ENCODE measurements at regions of chr11 and their contacts with region 1.

Region 1: DNA sequence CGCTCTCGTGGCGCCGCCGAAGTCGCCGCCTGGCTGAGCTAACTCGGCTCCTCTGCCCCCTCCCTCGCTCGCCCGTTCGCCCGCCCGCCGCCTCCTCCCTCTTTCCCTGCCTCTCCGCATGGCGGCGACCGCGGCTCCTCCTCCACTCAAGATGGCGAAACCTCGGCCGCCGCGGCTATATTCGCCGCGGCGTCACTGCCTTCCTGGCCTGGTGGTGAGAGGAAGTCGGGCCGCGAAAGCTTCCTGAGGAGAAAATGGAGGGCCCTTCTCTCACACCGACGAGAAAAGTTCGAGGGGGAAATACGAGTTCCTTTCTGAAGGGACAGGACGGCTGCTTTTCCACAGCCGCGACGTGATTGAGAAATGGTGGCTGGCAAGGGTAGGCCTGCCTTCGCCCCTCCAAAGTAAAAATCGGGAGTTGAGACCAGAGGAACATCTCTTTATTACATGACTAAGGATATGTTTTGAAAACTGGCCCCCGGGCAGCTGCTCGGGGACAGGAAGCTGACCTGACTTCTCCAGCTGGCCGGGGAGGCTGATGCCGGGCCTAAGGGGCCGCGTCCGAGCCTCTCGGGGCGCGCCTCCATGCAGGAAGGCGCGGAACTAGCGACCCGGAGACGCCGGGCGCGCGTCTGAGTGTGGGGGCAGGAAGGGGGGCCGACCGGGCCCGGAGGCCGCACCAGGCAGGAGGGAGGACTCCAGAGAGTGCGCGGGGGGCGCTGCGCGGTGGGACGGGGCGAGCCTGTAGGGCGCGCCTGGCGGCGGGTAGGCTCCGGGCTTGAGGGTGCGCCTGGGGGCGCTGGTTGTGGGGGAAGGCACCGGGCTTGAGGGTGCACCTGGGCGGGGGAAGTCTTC is at the start of gene DDX6:
- DNase-seq: peak; percentile 85
- H3K4me3 Mint-ChIP-seq: peak within 1 kb of the TSS; percentile 98
- H3K27ac Mint-ChIP-seq: peak within 1 kb of the TSS; percentile 99
- H3K4me1 Mint-ChIP-seq: peaks cover 29% of the 10 kb centered on the region
- H3K27me3 Mint-ChIP-seq: no peaks in the 10 kb centered on the region
- total RNA-seq, gene DDX6: 110 and 112 TPM in 2 replicates

Region 2: GRCh38 chr11:118401151-118401878 is 390.0 kb before region 1 on chr11 and contains the start of gene ATP5MG:
- intact Hi-C with region 1: loop called (anchors 5 kb)
- DNase-seq: peak; percentile 87
- H3K4me3 Mint-ChIP-seq: peak within 1 kb of the TSS; percentile 93
- H3K27ac Mint-ChIP-seq: peak within 1 kb of the TSS; percentile 96
- H3K4me1 Mint-ChIP-seq: peaks cover 68% of the 10 kb centered on the region
- H3K27me3 Mint-ChIP-seq: no peaks in the 10 kb centered on the region
- total RNA-seq, gene ATP5MG: 205 and 216 TPM in 2 replicates

Region 3: DNA sequence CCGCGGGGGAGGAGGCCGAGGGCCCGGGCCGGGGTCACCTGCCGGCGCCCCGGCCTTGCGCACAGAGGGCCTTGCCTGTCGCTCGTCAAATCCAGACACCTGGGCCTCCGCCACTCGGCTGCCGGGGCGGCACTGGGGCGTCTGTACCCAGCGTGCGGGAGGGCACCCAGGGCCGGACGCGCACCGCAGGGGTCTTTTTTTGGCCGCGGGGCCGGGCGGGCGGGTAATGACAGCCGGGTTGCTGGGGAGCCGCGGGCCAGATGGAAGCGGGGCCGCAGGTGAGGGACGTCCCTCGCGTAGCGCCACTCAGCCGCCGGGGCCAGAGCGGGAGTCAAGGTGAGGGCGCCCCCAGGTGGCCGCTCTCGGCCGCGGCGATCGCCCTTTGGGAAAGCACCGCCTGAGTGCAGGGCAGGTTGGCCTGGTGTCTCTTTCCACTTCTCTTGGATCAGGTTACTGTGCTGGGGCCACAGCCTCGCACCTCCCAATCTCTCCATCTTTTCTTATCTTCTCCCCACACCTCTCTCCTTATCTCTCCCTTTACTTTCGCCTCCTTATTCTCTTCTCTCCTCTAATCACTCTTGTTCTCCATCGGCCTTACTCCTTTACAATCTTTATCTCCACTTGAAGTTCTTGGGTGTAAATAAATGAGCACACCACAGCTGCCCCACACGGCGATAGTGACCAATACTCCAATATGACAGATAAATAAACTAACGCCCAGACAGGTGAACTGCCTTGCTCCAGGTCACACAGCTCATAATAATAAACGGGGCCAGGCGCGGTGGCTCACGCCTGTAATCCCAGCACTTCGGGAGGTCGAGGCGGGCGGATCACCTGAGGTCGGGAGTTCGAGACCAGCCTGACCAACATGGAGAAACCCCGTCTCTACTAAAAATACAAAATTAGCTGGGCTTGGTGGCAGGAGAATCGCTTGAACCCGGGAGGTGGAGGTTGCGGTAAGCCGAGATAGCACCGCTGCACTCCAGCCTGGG is 180.2 kb before region 1 on chr11:
- intact Hi-C with region 1: loop called (anchors 1 kb)
- DNase-seq: peak; percentile 73
- H3K4me3 Mint-ChIP-seq: peak overlapping the region; percentile 50
- H3K27ac Mint-ChIP-seq: no peak overlapping the region
- H3K4me1 Mint-ChIP-seq: peaks cover 23% of the 10 kb centered on the region
- H3K27me3 Mint-ChIP-seq: peaks cover 23% of the 10 kb centered on the region

Region 4: DNA sequence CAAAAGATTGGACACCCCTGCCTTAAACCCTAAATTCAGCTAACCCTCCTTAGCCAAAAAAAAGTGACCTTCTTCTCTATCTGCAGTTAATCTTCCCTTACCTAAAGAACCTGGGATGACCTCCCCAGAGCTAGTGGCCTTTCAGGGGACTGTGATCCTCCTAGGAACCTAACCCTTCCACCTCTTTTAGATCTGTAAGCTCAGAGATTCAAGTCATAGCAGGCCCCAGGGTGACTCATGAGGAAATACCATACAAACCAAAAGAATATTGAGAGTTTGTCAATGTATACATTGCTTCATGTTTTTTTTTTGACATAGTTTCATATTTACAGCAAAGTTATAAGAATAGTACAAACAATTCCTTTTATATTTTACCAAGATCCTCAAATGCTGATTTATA is 54.0 kb after region 1 on chr11:
- intact Hi-C with region 1: loop called (anchors 2 kb)
- DNase-seq: no peak
- H3K4me3 Mint-ChIP-seq: no peak overlapping the region
- H3K27ac Mint-ChIP-seq: peak overlapping the region; percentile 80
- H3K4me1 Mint-ChIP-seq: peaks cover 27% of the 10 kb centered on the region
- H3K27me3 Mint-ChIP-seq: peaks cover 5% of the 10 kb centered on the region

Region 5: DNA sequence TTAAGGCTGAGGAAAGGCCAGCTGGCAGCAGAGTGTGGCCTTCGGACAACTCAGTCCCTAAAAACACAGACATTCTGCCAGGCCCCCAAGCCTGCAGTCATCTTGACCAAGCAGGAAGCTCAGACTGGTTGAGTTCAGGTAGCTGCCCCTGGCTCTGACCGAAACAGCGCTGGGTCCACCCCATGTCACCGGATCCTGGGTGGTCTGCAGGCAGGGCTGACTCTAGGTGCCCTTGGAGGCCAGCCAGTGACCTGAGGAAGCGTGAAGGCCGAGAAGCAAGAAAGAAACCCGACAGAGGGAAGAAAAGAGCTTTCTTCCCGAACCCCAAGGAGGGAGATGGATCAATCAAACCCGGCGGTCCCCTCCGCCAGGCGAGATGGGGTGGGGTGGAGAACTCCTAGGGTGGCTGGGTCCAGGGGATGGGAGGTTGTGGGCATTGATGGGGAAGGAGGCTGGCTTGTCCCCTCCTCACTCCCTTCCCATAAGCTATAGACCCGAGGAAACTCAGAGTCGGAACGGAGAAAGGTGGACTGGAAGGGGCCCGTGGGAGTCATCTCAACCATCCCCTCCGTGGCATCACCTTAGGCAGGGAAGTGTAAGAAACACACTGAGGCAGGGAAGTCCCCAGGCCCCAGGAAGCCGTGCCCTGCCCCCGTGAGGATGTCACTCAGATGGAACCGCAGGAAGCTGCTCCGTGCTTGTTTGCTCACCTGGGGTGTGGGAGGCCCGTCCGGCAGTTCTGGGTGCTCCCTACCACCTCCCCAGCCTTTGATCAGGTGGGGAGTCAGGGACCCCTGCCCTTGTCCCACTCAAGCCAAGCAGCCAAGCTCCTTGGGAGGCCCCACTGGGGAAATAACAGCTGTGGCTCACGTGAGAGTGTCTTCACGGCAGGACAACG is 104.1 kb after region 1 on chr11:
- intact Hi-C with region 1: loop called (anchors 1 kb)
- DNase-seq: peak; percentile 65
- H3K4me3 Mint-ChIP-seq: peak overlapping the region; percentile 32
- H3K27ac Mint-ChIP-seq: peak overlapping the region; percentile 81
- H3K4me1 Mint-ChIP-seq: peaks cover 65% of the 10 kb centered on the region
- H3K27me3 Mint-ChIP-seq: no peaks in the 10 kb centered on the region

Region 6: DNA sequence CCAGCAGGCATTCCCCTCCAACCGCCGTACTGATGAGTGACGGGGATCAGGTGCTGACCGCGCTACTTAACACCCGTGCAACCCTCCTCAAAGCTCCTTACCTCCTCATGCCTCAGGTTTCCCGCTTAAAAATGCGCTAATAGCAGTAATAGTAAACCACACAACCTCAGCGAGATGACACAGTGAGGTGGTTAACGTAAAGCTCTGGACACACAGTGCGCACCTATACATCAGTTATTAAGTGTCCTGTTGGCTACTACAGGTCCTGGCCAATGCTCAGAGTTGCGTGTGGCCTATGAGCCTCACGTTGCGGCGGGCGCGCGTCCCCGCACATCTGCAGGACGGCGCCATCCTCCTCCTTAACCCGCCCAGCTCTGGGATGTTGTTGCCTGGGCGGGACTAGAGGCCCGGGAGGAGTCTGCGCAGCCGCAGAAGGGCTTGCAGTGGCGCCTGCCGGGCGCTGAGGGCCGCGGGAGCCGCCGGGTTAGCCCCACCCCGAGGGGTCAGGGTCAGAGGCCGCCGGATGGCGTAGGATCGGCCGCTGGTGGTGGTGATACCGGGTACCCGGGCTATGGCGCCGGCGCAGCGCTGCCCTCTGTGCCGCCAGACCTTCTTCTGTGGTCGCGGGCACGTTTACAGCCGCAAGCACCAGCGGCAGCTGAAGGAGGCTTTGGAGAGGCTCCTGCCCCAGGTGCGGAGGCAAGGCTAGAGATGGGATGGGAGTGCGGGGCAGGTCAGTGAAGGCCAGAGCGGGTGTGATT is 206.5 kb after region 1 on chr11 and contains the start of gene CENATAC:
- intact Hi-C with region 1: loop called (anchors 1 kb)
- DNase-seq: peak; percentile 96
- H3K4me3 Mint-ChIP-seq: peak within 1 kb of the TSS; percentile 96
- H3K27ac Mint-ChIP-seq: peak within 1 kb of the TSS; percentile 97
- H3K4me1 Mint-ChIP-seq: peaks cover 27% of the 10 kb centered on the region
- H3K27me3 Mint-ChIP-seq: no peaks in the 10 kb centered on the region
- total RNA-seq, gene CENATAC: 50.1 and 53.6 TPM in 2 replicates

Region 7: GRCh38 chr11:119816660-119817059 is 1025.3 kb after region 1 on chr11:
- intact Hi-C with region 1: no loop called
- DNase-seq: no peak
- H3K4me3 Mint-ChIP-seq: no peak overlapping the region
- H3K27ac Mint-ChIP-seq: no peak overlapping the region
- H3K4me1 Mint-ChIP-seq: no peaks in the 10 kb centered on the region
- H3K27me3 Mint-ChIP-seq: peaks cover 7% of the 10 kb centered on the region

Measured in activated T-helper 1 cell treated with anti-CD3 and anti-CD28 coated beads, Interleukin-12 subunit alpha, Interleukin-12 subunit beta, Interleukin-2, Interleukin-4 antibody, amounts not matched to agents 30 ng/mL and 10 ng/mL and 1 ng/mL, durations not matched to agents 14 hours and 24 hours and 36 hours (primary cell).